ENCODE measurements at regions of chr2 and their contacts with region 1.

Region 1: DNA sequence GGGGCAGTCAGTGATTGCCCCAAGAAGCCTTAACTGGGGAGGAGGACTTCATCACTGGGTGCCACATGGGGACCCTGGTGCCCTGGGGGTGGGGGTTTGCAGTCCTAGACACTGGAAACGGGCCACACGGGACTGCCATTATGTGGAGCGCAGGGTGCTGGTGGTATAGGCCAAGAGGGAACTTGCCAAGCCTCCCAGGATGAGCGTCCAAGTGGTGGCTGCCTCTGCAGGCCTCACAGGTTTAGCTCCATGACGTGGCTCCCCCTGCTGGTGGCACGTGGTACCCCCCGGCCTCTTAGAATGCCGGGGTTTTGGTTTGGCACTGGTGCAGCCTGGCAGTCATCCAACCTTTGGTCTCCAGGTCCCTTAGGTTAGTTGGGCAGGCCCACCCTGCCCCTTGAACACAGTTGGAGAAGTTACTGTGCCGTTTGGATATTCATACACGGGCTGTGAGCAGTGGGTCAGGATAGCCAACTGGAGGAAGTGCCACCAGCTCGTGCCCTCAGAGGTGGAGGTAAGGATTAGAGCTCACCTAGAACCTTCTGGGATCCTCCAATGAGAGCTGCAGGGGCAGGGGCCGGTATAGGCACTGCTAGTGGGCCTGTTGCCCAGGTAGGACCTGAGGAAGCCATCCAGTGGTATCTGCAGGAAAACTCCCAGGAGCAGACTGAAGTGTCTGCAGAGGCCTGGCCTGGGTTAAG is 5.6 kb downstream of the PTMA start:
- DNase-seq: peak; percentile 82 to 95 (median 90)
- ATAC-seq: peak; percentile 41 to 46
- H3K4me3 Mint-ChIP-seq: peak overlapping the region in 9 of 10 donors; percentile 16 to 84 (median 59)
- H3K27ac Mint-ChIP-seq: peak overlapping the region; percentile 86 to 97 (median 94)
- H3K4me1 Mint-ChIP-seq: peaks cover 33 to 51% (median 39%) of the 10 kb centered on the region in 4 donors
- H3K27me3 Mint-ChIP-seq: no peaks in the 10 kb centered on the region

Region 2: DNA sequence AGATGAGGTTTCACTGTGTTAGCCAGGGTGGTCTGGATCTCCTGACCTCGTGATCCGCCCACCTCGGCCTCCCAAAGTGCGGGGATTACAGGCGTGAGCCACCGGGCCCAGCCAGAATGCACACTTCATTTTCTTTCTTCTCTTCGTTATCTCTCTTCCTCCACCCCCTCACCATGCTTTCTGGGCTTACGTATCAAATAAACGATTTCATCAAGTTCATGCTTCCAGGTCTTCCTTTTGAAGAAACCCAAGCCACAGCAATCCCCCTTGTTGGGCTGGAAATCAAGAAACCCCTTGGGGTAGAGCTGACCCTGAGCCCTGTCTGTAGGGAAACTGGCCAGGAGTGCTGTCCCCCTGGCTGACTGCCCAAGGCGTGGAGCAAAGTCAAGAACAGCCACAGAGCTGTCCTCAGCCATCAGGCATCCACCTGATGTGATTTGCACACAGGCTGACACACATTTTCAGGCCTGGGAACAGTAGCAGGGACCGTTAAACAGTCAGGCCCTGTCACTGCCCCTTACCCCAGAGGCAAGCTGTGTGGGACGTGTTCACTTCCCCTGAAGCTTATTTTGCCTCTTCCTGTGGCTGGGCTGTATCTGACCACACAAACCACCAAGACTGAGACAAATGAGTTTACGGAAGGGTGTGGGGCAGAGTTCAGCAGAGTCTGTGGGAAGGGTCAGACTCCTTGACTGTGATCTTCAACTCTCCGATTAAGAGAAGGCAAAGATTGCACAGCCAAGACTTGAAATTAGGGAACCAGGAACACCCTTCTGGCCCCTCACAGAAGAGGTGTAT is 168.6 kb before region 1 on chr2:
- POLR2A ChIA-PET with region 1: no interaction called
- DNase-seq: peak in 4 of 10 donors; percentile 22 to 45 (median 32)
- ATAC-seq: peak; percentile 77 to 81
- H3K4me3 Mint-ChIP-seq: peak overlapping the region; percentile 60 to 85 (median 74)
- H3K27ac Mint-ChIP-seq: peak overlapping the region; percentile 77 to 95 (median 84)
- H3K4me1 Mint-ChIP-seq: peaks cover 19 to 61% (median 35%) of the 10 kb centered on the region in 4 donors
- H3K27me3 Mint-ChIP-seq: peaks cover 0 to 2% (median 0%) of the 10 kb centered on the region in 5 donors

Region 3: GRCh38 chr2:231612179-231613053 is 101.5 kb before region 1 on chr2:
- POLR2A ChIA-PET with region 1: interaction called, 53 read pairs
- DNase-seq: peak; percentile 76 to 94 (median 85)
- ATAC-seq: peak; percentile 59 to 76
- H3K4me3 Mint-ChIP-seq: peak overlapping the region; percentile 57 to 91 (median 88)
- H3K27ac Mint-ChIP-seq: peak overlapping the region; percentile 5 to 95 (median 80)
- H3K4me1 Mint-ChIP-seq: peaks cover 10 to 38% (median 30%) of the 10 kb centered on the region in 4 donors
- H3K27me3 Mint-ChIP-seq: no peaks in the 10 kb centered on the region

Region 4: GRCh38 chr2:231662028-231662810 is 51.7 kb before region 1 on chr2:
- POLR2A ChIA-PET with region 1: interaction called, 158 read pairs
- DNase-seq: peak; percentile 92 to 99 (median 98)
- ATAC-seq: peak; percentile 88 to 91
- H3K4me3 Mint-ChIP-seq: peak overlapping the region; percentile 71 to 87 (median 82)
- H3K27ac Mint-ChIP-seq: peak overlapping the region; percentile 82 to 99 (median 96)
- H3K4me1 Mint-ChIP-seq: peaks cover 6 to 37% (median 17%) of the 10 kb centered on the region in 4 donors
- H3K27me3 Mint-ChIP-seq: no peaks in the 10 kb centered on the region

Region 5: GRCh38 chr2:231674587-231675338 is 39.1 kb before region 1 on chr2:
- POLR2A ChIA-PET with region 1: interaction called, 124 read pairs
- DNase-seq: peak; percentile 26 to 79 (median 47)
- ATAC-seq: peak; percentile 60 to 67
- H3K4me3 Mint-ChIP-seq: peak overlapping the region in 1 of 10 donors; percentile 20
- H3K27ac Mint-ChIP-seq: peak overlapping the region in 2 of 10 donors; percentile 46 to 61
- H3K4me1 Mint-ChIP-seq: peaks cover 3 to 44% (median 8%) of the 10 kb centered on the region in 4 donors
- H3K27me3 Mint-ChIP-seq: peaks cover 0 to 2% (median under 1%) of the 10 kb centered on the region in 5 donors

Region 6: DNA sequence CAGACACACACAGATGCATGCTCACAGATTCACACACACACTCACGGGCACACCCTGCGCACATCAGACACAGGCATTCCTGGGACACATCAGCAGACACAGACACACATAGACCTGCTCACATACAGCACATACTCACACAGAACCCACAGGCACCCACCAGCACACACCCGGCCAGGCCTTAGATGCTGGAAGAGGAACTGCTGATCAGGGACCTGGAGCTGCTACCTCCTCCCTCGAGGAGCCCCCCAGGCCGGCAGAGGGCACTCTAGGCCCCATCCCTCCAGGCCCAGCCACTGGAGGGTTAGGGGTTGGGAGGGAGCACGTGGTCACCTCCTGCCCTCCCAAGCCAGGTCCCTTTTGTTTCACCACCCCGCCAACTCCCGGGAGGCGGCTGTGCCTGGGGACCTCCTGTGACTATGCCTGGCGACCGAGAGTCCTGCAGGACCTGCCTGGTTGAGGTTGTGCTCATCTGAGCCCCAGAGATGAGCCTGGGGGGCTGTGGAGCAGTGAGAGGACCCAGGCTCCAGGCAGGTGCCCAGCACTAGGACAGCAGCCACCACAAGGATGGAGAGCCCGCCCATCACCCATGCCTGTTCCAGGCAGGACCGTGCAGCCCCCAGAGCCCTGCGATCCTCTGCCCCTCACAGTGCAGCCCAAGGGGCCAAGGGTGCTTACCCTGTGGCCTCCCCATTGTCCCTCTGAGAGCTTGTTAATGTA is 26.6 kb before region 1 on chr2:
- POLR2A ChIA-PET with region 1: interaction called, 124 read pairs
- DNase-seq: peak; percentile 52 to 87 (median 66)
- ATAC-seq: peak; percentile 95 to 98
- H3K4me3 Mint-ChIP-seq: no peak overlapping the region
- H3K27ac Mint-ChIP-seq: peak overlapping the region in 5 of 10 donors; percentile 27 to 64 (median 41)
- H3K4me1 Mint-ChIP-seq: peaks cover 5 to 17% (median 13%) of the 10 kb centered on the region in 4 donors
- H3K27me3 Mint-ChIP-seq: peaks cover 0 to 12% (median 7%) of the 10 kb centered on the region in 5 donors

Measured in naive thymus-derived CD8-positive, alpha-beta T cell (primary cell).